ENCODE measurements at regions of chr10 and their contacts with region 1.

Region 1: GRCh38 chr10:132421392-132421877 is 24.4 kb downstream of the PWWP2B start:
- DNase-seq: no peak
- H3K4me3 ChIP-seq: no peak overlapping the region
- H3K27ac ChIP-seq: 0 out of 2 replicates have a peak overlapping the region, but pooled peaks have one; percentile 48
- H3K4me1 ChIP-seq: peaks cover 9 to 36% (median 22%) of the 10 kb centered on the region in 4 experiments
- H3K27me3 ChIP-seq: no peaks in the 10 kb centered on the region
- CTCF ChIP-seq: no peak
- EP300 ChIP-seq: no peak
- POLR2A ChIP-seq: no peak
- RAD21 ChIP-seq: no peak

Region 2: GRCh38 chr10:132065491-132066105 is 355.8 kb before region 1 on chr10 and contains the start of gene JAKMIP3:
- CTCF ChIA-PET with region 1: no interaction called
- POLR2A ChIA-PET with region 1: no interaction called
- DNase-seq: peak in 1 of 2 experiments; percentile 72
- H3K4me3 ChIP-seq: peak within 1 kb of the TSS in 2 of 4 experiments; percentile 23 to 37; a peak in 4 of 8 replicates
- H3K27ac ChIP-seq: no peak within 1 kb of the TSS
- H3K4me1 ChIP-seq: peaks cover 0 to 17% (median 11%) of the 10 kb centered on the region in 4 experiments; a peak in 6 of 7 replicates
- H3K27me3 ChIP-seq: peaks cover 0 to 2% (median 0%) of the 10 kb centered on the region in 4 experiments; a peak in 2 of 7 replicates
- CTCF ChIP-seq: no peak
- EP300 ChIP-seq: no peak
- POLR2A ChIP-seq: no peak; a peak in 1 of 3 replicates
- RAD21 ChIP-seq: no peak
- total RNA-seq, gene JAKMIP3: 0.84 and 0.91 TPM in 2 replicates

Region 3: DNA sequence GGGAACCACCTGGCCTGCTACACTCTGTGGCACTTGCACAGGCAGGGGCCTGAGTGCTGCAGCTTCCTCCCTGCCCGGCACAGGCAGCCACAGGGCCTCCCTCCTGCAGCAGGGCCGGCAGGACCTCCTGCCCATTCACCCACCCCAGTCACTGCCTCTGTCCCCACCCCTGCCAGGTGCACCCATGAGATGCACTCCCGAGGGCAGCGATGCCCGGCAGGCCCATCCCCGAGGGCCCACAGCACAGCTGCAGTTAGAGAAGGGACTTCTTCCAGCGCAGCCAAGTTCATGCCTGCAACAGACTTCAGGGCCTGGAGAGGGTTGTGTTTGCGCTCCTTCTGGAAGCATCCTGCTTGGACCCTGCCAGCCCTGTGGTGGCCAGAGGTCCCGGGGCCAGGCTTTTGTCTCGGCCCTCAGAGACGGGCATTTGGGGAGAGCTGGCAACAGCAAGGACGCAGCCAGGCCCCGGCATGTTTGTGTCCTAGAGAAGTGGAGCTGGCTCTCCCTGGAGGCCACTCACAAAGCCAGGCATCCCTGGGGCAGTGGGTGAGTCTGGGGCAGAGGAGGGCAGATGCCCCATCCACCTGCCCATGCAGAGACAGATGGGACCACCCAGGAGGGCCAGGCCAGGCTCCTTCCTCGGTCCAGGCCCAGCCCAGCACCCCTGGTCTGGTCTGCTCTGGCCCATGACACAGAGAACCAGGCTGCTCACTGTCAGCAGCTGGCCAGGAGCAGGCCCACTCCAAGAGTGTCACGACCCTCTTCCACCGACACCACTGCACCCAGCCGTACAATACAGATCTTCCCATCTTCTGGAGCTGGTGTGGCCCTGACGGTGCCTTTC is 17.0 kb after region 1 on chr10:
- CTCF ChIA-PET with region 1: interaction called, 5 read pairs
- POLR2A ChIA-PET with region 1: interaction called, 10 read pairs
- DNase-seq: no peak
- H3K4me3 ChIP-seq: no peak overlapping the region
- H3K27ac ChIP-seq: no peak overlapping the region
- H3K4me1 ChIP-seq: no peaks in the 10 kb centered on the region
- H3K27me3 ChIP-seq: no peaks in the 10 kb centered on the region
- CTCF ChIP-seq: no peak
- EP300 ChIP-seq: no peak
- POLR2A ChIP-seq: no peak
- RAD21 ChIP-seq: no peak